Esophagus squamous epithelium (tissue), 5 donors: ENCODE measurements at regions of chr6 and their contacts with region 1.

Region 1: GRCh38 chr6:53734473-53735299 is 60.1 kb upstream of the LRRC1 start:
- DNase-seq: no peak
- H3K4me3 ChIP-seq: no peak overlapping the region
- H3K27ac ChIP-seq: peak overlapping the region; percentile 3 to 76 (median 55)
- H3K4me1 ChIP-seq: peaks cover 0 to 45% (median 8%) of the 10 kb centered on the region in 3 donors
- H3K27me3 ChIP-seq: no peaks in the 10 kb centered on the region
- CTCF ChIP-seq: peak in 4 of 6 experiments; percentile 10 to 42 (median 21)
- POLR2A ChIP-seq: no peak

Region 2: DNA sequence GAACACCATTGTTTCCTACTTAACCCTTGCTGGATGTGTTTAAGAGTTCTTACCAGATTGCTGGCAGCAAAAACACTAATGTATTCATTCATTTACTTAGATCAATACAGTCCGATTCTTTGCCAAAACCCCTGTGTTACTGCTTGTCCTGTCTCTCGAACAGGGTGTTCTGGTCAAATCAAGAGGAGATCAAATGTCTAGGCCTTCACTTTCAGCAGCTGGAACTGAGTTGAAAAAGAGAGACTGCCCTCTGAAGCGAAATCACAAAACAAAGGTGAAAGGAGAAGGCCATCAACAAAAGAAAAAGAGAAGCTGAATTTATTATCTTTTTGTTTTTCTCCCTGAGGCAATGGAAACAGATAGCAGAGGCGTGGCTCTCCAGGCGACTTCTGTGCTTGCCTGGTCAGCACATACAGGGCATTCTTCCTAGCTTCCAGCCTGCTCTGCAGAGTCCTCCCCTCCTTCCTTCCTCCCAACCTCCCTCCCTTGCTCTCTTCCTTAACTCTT is 542.0 kb before region 1 on chr6:
- intact Hi-C with region 1: no loop called
- DNase-seq: no peak
- H3K4me3 ChIP-seq: no peak overlapping the region
- H3K27ac ChIP-seq: no peak overlapping the region
- H3K4me1 ChIP-seq: peaks cover 0 to 8% (median 0%) of the 10 kb centered on the region in 3 donors
- H3K27me3 ChIP-seq: no peaks in the 10 kb centered on the region
- CTCF ChIP-seq: no peak
- POLR2A ChIP-seq: no peak

Region 3: DNA sequence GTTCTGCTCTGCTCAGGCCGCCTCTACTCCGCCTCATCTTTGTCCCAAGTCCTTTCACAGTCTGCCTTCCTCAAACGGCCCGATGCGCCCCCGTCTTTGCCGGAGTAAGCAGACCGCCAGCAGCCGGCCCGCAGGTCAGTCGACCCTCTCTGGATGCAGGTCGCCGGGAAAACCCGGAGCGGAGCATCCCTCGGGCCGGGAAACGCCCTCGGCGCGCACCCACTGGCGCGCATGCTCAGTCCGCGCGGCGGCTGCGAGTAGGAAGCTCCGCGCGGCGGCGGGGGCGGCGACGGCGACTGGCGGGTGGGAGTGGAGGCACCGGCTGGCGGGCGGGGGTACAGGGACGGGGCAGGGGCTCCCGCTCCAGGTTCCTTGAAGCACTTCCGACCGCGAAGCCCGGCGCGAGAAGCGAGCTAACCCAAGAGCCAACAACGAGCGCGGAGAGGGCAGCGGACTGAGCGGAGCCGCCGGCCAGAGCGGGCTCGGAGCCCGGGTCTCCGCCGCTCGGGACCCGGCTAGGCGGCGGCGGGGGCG is 60.1 kb after region 1 on chr6 and contains the start of gene LRRC1:
- intact Hi-C with region 1: loop called (anchors 10 kb)
- DNase-seq: peak; percentile 37
- H3K4me3 ChIP-seq: peak within 1 kb of the TSS; percentile 73 to 94 (median 80)
- H3K27ac ChIP-seq: peak within 1 kb of the TSS; percentile 85 to 94 (median 91)
- H3K4me1 ChIP-seq: peaks cover 0 to 63% (median 23%) of the 10 kb centered on the region in 3 donors
- H3K27me3 ChIP-seq: no peaks in the 10 kb centered on the region
- CTCF ChIP-seq: peak in 1 of 6 experiments; percentile 0
- POLR2A ChIP-seq: peak in 3 of 4 donors; percentile 50 to 83 (median 58)
- total RNA-seq, gene LRRC1: 23.2 to 38.5 (median 28.3) TPM

Region 4: DNA sequence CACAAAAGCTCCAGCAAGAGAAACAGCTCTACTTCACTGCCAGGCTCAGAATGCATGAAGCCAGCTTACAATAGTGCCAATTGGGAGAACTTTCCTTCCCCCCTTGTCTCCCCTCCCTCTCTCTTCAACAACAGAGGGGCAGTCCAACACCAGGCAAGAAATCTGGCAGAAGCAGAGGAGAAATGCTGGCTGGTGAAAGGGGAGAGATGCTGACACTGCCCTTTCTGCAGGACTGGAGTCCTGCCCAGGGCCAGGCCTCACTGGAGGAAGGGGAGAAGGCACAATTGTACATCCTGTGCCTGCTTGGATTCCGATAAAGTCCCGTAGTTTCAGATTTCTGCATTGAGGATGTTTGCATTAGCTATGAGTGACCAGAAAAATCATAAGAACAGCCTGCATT is 208.7 kb after region 1 on chr6:
- intact Hi-C with region 1: no loop called
- DNase-seq: no peak
- H3K4me3 ChIP-seq: no peak overlapping the region
- H3K27ac ChIP-seq: peak overlapping the region in 3 of 4 donors; percentile 32 to 49 (median 42)
- H3K4me1 ChIP-seq: peaks cover 0 to 22% (median 13%) of the 10 kb centered on the region in 3 donors
- H3K27me3 ChIP-seq: no peaks in the 10 kb centered on the region
- CTCF ChIP-seq: no peak
- POLR2A ChIP-seq: no peak

Region 5: DNA sequence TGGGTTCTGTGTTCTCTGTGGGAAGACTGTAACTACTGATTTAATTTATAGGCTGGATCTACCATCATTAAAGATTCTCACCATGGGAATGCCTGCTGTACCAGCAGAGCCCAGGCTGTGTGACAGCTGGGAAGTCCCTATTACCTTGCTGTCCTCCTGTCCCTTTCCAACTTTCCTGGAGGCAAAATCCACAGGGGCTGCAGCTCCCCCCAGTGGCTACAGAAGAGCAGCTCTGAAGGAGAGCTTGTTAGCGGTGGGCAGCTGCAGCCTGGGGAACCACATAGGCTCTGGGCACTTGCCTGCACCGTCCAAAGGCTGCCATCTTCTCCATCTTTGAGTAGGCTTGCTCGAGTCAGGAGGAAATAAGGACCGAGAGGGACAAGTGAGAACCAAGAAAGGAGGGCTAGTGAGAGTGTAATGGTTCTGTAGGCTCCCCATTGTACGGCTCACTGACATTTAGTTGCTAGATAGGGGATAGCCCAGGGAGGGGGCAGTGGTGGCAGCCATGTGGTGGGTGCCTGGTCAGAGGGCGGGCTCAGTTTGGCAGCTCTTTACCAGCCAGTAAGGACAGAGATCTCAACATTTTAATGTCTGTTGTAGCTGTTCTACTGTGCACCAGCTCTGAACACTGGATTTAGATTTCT is 221.5 kb after region 1 on chr6:
- intact Hi-C with region 1: loop called (anchors 10 kb)
- DNase-seq: no peak
- H3K4me3 ChIP-seq: no peak overlapping the region
- H3K27ac ChIP-seq: peak overlapping the region in 2 of 4 donors; percentile 12 to 33
- H3K4me1 ChIP-seq: peaks cover 0 to 12% (median 0%) of the 10 kb centered on the region in 3 donors
- H3K27me3 ChIP-seq: no peaks in the 10 kb centered on the region
- CTCF ChIP-seq: peak; percentile 30 to 86 (median 66)
- POLR2A ChIP-seq: no peak